Activated B cell treated with CpG ODN at 0.5 μM for 24 hours (primary cell): ENCODE measurements at regions of chr17 and their contacts with region 1.

Region 1: GRCh38 chr17:3048767-3049471 is 14.5 kb downstream of the OR1D5 start:
- DNase-seq: peak; percentile 80
- ATAC-seq: peak; percentile 98
- H3K4me3 Mint-ChIP-seq: peak overlapping the region; percentile 92
- H3K27ac Mint-ChIP-seq: peak overlapping the region; percentile 83
- H3K4me1 Mint-ChIP-seq: peaks cover 8% of the 10 kb centered on the region
- H3K27me3 Mint-ChIP-seq: no peaks in the 10 kb centered on the region
- CTCF ChIP-seq: no peak

Region 2: GRCh38 chr17:3104322-3104721 is 55.4 kb after region 1 on chr17 and contains the start of gene OR1D2:
- CTCF ChIA-PET with region 1: no interaction called
- POLR2A ChIA-PET with region 1: no interaction called
- intact Hi-C with region 1: no loop called
- DNase-seq: no peak
- ATAC-seq: no peak
- H3K4me3 Mint-ChIP-seq: no peak within 1 kb of the TSS
- H3K27ac Mint-ChIP-seq: no peak within 1 kb of the TSS
- H3K4me1 Mint-ChIP-seq: no peaks in the 10 kb centered on the region
- H3K27me3 Mint-ChIP-seq: peaks cover 11% of the 10 kb centered on the region
- CTCF ChIP-seq: no peak
- total RNA-seq, gene OR1D2: not detected in 2 replicates

Region 3: DNA sequence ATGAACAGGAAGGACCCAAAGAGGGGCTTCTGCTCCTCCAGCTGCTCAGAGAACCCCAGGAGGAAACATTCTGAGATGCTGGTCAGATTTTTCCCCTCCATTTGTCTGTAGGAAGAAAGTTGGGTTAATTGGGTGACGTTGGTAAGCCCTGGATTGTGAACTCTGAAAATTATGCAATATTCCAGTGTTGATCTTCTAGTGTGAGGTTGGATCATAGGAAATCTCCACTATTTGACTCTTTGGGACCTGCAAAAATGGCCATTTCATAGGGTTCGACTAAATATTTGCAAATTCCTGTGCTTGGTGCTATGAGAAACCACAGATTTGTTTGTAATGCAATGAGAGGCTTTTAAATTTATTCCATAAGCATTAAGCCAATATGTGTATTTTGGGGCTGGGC is 78.5 kb after region 1 on chr17 and contains the start of gene OR1G1:
- CTCF ChIA-PET with region 1: no interaction called
- POLR2A ChIA-PET with region 1: no interaction called
- intact Hi-C with region 1: no loop called
- DNase-seq: no peak
- ATAC-seq: no peak
- H3K4me3 Mint-ChIP-seq: no peak within 1 kb of the TSS
- H3K27ac Mint-ChIP-seq: no peak within 1 kb of the TSS
- H3K4me1 Mint-ChIP-seq: peaks cover 3% of the 10 kb centered on the region
- H3K27me3 Mint-ChIP-seq: peaks cover 48% of the 10 kb centered on the region
- CTCF ChIP-seq: no peak
- total RNA-seq, gene OR1G1: not detected in 2 replicates

Region 4: GRCh38 chr17:3535253-3535995 is 486.5 kb after region 1 on chr17:
- CTCF ChIA-PET with region 1: no interaction called
- POLR2A ChIA-PET with region 1: no interaction called
- intact Hi-C with region 1: loop called (anchors 5 kb)
- DNase-seq: peak; percentile 53
- ATAC-seq: peak; percentile 97
- H3K4me3 Mint-ChIP-seq: peak overlapping the region; percentile 67
- H3K27ac Mint-ChIP-seq: no peak overlapping the region
- H3K4me1 Mint-ChIP-seq: peaks cover 13% of the 10 kb centered on the region
- H3K27me3 Mint-ChIP-seq: no peaks in the 10 kb centered on the region
- CTCF ChIP-seq: no peak

Region 5: GRCh38 chr17:3602499-3602898 is 553.6 kb after region 1 on chr17:
- CTCF ChIA-PET with region 1: interaction called, 10 read pairs
- POLR2A ChIA-PET with region 1: no interaction called
- intact Hi-C with region 1: no loop called
- DNase-seq: no peak
- ATAC-seq: peak; percentile 58
- H3K4me3 Mint-ChIP-seq: no peak overlapping the region
- H3K27ac Mint-ChIP-seq: no peak overlapping the region
- H3K4me1 Mint-ChIP-seq: peaks cover 4% of the 10 kb centered on the region
- H3K27me3 Mint-ChIP-seq: no peaks in the 10 kb centered on the region
- CTCF ChIP-seq: no peak

Region 6: GRCh38 chr17:3647769-3648555 is 599.0 kb after region 1 on chr17:
- CTCF ChIA-PET with region 1: interaction called, 11 read pairs
- POLR2A ChIA-PET with region 1: no interaction called
- intact Hi-C with region 1: loop called (anchors 1 kb)
- DNase-seq: no peak
- ATAC-seq: peak; percentile 29
- H3K4me3 Mint-ChIP-seq: no peak overlapping the region
- H3K27ac Mint-ChIP-seq: no peak overlapping the region
- H3K4me1 Mint-ChIP-seq: peaks cover 30% of the 10 kb centered on the region
- H3K27me3 Mint-ChIP-seq: no peaks in the 10 kb centered on the region
- CTCF ChIP-seq: no peak

Region 7: DNA sequence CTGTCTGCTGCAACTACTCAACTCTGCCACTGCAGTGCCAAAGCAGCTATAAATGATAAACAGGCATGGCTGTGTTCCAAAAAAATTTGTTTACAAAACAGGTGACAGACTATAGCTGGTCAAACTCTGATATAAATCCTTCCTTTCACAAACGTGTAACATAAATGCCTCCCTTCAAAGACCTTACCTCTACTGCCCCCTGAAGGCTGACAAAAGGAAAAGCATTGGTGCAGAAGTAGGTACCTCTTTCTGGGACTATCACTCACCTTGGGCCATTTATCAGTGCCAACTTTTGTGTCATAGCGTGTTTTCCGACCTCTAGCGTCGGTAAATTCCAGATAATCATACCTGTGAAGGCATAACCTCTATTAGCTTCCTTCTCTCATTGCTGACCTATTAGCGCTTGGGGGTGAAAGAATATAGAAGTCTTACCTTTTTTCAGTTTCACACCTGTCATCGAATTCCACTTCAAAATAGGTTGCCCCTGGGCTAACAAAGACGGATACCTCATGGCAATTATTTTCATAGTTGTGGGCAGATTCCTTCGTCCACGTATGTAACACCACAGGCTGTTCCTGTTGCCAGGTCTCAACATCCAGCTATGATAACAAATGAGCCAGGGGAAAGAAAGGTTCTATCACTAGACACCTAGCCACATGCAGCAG is 1026.0 kb after region 1 on chr17:
- CTCF ChIA-PET with region 1: no interaction called
- POLR2A ChIA-PET with region 1: no interaction called
- intact Hi-C with region 1: loop called (anchors 5 kb)
- DNase-seq: no peak
- ATAC-seq: peak; percentile 53
- H3K4me3 Mint-ChIP-seq: peak overlapping the region; percentile 76
- H3K27ac Mint-ChIP-seq: peak overlapping the region; percentile 84
- H3K4me1 Mint-ChIP-seq: peaks cover 18% of the 10 kb centered on the region
- H3K27me3 Mint-ChIP-seq: no peaks in the 10 kb centered on the region
- CTCF ChIP-seq: no peak